CD4-positive, alpha-beta memory T cell (primary cell): ENCODE measurements at regions of chr3 and their contacts with region 1.

Region 1: DNA sequence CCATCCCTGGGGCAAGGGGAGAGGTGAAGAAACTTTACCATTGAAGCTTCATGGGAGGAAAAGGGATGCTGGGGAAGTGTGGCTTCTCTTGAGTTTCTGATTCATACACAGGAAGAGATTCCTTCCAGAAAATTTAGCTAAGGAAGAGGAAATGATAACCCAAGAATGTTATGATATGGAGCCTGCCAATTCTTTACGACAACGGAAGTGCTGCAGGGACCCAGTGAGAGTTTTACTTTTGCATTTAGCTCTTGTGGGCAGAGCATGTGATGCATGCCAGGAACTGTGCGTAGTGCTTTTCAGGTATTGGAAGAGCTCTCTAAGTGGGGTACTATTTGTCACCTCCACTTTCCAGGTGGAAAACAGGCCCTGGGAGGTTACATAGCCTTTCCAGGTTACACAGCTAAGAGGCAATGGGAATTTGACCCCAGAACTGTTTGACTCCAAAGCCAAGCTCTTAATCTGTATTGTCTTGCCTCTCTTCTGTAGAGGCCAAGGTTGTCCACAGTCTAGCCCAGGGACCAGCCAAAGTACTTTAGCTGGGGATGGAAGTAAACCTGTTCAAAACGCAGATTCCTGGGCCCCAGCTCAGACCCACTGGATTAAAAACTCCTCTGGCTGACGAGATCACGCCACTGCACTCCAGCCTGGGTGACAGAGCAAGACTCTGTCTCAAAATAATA is 23.0 kb downstream of the CMTM7 start:
- DNase-seq: peak; percentile 61 to 70 (median 65)
- H3K4me3 ChIP-seq: no peak overlapping the region
- H3K4me3 Mint-ChIP-seq: peak overlapping the region; percentile 45 to 73 (median 56)
- H3K27ac ChIP-seq: peak overlapping the region; percentile 58
- H3K27ac Mint-ChIP-seq: peak overlapping the region; percentile 88 to 98 (median 97)
- H3K4me1 ChIP-seq: peaks cover 76% of the 10 kb centered on the region
- H3K4me1 Mint-ChIP-seq: peaks cover 48 to 87% (median 64%) of the 10 kb centered on the region in 4 donors
- H3K27me3 ChIP-seq: no peaks in the 10 kb centered on the region
- H3K27me3 Mint-ChIP-seq: no peaks in the 10 kb centered on the region

Region 2: DNA sequence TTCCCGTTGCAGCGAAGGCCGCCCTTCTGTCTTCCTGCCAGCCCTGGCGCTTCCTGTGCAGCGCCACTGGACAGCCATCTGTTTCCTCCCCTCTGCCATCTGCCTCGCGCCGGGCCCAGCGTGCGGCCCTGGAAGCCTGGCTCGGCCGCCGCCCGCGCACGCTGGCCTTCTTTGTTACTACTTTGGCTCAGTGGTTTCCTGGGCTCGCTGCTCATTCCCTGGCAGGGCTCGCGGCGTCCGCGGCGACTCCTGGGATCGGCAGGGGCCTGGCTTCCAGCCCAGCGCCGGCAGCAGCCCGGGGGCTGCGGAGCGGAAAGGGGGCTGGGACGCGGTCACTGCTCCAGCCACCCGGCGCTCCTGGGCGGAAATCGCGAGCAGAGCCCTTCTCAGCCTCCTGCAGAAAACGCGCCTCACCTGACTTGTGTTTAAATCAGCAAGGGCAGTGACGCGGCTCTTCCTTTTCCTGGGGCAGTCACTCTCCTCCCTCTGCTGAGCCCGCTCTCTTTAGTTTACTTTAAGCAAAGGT is 13.0 kb before region 1 on chr3:
- CTCF ChIA-PET with region 1: interaction called, 15 read pairs
- POLR2A ChIA-PET with region 1: interaction called, 12 read pairs
- intact Hi-C with region 1: loop called (anchors 1 kb)
- DNase-seq: peak; percentile 60 to 75 (median 67)
- H3K4me3 ChIP-seq: peak overlapping the region; percentile 61 to 68
- H3K4me3 Mint-ChIP-seq: peak overlapping the region; percentile 87 to 95 (median 94)
- H3K27ac ChIP-seq: peak overlapping the region; percentile 84
- H3K27ac Mint-ChIP-seq: peak overlapping the region; percentile 95 to 100 (median 99)
- H3K4me1 ChIP-seq: peaks cover 72% of the 10 kb centered on the region
- H3K4me1 Mint-ChIP-seq: peaks cover 53 to 84% (median 69%) of the 10 kb centered on the region in 4 donors
- H3K27me3 ChIP-seq: no peaks in the 10 kb centered on the region
- H3K27me3 Mint-ChIP-seq: no peaks in the 10 kb centered on the region

Region 3: DNA sequence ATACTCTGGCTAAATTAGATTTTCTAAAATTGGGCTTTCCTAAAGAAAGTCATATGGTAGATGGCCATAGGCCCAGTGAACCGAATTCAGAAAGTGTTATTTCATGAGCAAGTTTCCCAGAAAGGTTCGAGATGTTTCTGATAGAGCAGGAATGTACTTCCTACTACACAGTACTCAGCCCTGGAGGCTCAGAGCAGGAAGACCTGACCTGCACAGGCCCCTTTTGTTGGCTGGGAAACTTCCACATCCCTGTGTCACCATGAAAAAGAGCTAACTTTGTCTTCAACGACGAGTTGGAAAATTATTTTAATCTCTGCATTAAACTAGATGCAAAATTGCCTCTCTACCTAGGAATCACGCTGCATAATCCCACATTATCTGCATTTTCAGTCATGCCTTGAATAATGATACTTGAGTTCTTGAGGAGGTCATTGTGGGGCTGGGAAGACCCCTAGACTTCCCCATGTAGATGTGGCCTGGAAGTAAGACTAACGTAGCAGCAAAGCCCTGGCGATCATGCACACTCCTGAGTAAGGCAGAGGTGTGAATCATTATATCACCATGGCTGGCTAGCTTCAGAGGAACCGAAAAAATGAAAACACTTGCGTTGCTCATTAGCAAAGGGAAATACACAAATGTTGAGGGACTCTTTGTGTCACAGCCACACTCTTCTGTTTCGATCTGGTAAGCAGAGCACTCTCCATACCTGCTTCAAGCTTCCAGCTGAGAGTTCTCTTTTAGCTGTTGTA is 24.1 kb after region 1 on chr3:
- CTCF ChIA-PET with region 1: interaction called, 3 read pairs
- POLR2A ChIA-PET with region 1: interaction called, 68 read pairs
- intact Hi-C with region 1: loop called (anchors 2 kb)
- DNase-seq: peak in 1 of 5 donors; percentile 16
- H3K4me3 ChIP-seq: peak overlapping the region in 1 of 2 donors; percentile 34
- H3K4me3 Mint-ChIP-seq: peak overlapping the region; percentile 8 to 86 (median 70)
- H3K27ac ChIP-seq: peak overlapping the region; percentile 17
- H3K27ac Mint-ChIP-seq: peak overlapping the region; percentile 68 to 94 (median 85)
- H3K4me1 ChIP-seq: peaks cover 79% of the 10 kb centered on the region
- H3K4me1 Mint-ChIP-seq: peaks cover 53 to 91% (median 64%) of the 10 kb centered on the region in 4 donors
- H3K27me3 ChIP-seq: no peaks in the 10 kb centered on the region
- H3K27me3 Mint-ChIP-seq: no peaks in the 10 kb centered on the region

Region 4: GRCh38 chr3:32544894-32545293 is 130.2 kb after region 1 on chr3:
- CTCF ChIA-PET with region 1: no interaction called
- POLR2A ChIA-PET with region 1: no interaction called
- intact Hi-C with region 1: no loop called
- DNase-seq: no peak
- H3K4me3 ChIP-seq: no peak overlapping the region
- H3K4me3 Mint-ChIP-seq: no peak overlapping the region
- H3K27ac ChIP-seq: no peak overlapping the region
- H3K27ac Mint-ChIP-seq: peak overlapping the region in 1 of 7 donors; percentile 65
- H3K4me1 ChIP-seq: no peaks in the 10 kb centered on the region
- H3K4me1 Mint-ChIP-seq: peaks cover 14 to 31% (median 17%) of the 10 kb centered on the region in 4 donors
- H3K27me3 ChIP-seq: no peaks in the 10 kb centered on the region
- H3K27me3 Mint-ChIP-seq: no peaks in the 10 kb centered on the region

Region 5: DNA sequence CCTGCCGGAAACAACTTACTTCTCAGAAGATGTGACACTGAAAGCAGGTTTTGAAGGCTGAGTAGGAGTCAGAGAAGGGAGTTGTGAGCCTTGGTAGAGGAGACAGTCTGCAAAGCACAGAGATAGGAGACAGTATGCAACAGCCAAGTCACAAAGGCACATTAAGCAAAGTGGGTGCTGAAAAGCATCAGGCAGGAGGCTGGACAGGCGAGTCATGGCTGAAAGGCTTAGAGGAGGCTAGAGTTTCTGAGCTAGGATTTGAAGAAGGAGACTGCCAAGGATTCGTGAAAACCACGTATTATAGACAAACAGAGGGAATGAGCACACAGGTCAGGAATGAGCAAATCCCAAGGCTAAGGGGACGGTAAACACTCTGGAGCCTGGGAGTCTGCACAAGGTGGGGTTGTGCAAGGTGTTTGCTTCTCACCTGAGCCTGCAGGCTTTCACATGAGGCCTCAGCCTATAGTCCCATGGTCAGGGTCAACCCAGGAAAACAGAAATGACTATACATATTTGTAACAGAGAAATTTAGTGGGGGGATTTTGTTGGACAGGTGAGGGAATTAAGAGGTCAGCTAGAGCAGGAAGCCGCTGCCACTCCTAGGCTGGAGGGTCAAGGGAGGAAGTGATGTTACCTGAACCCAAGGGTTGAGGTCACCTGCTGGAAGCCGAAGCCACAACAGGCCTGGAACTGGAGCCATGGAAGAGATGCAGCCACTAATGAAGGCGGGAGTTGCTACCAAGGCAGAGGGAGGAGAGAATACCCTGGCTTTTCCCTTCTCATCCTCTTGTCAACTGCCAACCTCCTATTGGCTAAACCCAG is 380.0 kb after region 1 on chr3:
- CTCF ChIA-PET with region 1: no interaction called
- POLR2A ChIA-PET with region 1: no interaction called
- intact Hi-C with region 1: no loop called
- DNase-seq: no peak
- H3K4me3 ChIP-seq: no peak overlapping the region
- H3K4me3 Mint-ChIP-seq: no peak overlapping the region
- H3K27ac ChIP-seq: no peak overlapping the region
- H3K27ac Mint-ChIP-seq: no peak overlapping the region
- H3K4me1 ChIP-seq: no peaks in the 10 kb centered on the region
- H3K4me1 Mint-ChIP-seq: no peaks in the 10 kb centered on the region
- H3K27me3 ChIP-seq: no peaks in the 10 kb centered on the region
- H3K27me3 Mint-ChIP-seq: no peaks in the 10 kb centered on the region